ENCODE measurements at regions of chr9 and their contacts with region 1.

Region 1: GRCh38 chr9:73104342-73104741 is 47.3 kb upstream of the ANXA1 start:
- DNase-seq: no peak
- ATAC-seq: no peak
- H3K4me3 ChIP-seq: no peak overlapping the region
- H3K27ac ChIP-seq: 0 out of 6 replicates have a peak overlapping the region, but pooled peaks of 1 of the 2 experiments have one; percentile 12
- H3K4me1 ChIP-seq: peaks cover 7% of the 10 kb centered on the region; the same call in 2 of the 3 replicates
- CTCF ChIP-seq: no peak
- EP300 ChIP-seq: no peak
- POLR2A ChIP-seq: no peak
- RAD21 ChIP-seq: no peak

Region 2: DNA sequence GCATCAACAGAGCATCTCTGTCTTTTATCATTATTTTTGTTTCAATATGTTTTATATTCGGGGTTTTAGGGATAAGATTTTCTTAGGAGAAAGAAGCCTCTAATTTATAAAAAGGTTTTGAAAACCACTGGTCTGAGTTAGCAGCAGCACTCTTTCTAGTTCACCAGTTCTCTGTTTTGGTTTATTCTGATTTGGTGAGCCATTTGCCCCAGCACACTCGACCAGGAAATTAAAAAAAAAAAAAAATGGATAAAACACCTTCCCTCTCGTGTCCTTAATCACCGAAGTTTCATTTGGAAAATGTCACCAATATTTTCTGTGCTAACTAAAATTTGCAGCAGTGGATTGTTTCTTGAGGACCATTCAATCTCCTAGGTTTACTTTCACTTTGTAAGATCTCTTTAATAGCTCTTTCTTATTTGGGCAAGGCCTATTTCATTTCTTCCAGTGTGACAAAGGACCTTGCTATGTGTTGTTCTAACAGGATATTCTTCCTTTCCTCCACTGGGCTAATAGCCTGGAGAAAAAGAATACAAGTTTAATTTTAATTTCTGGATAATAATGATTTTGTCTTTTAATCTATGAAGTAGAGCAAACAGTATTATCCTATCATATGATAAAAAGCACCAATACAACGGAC is 10.5 kb before region 1 on chr9:
- CTCF ChIA-PET with region 1: interaction called, 20 read pairs
- POLR2A ChIA-PET with region 1: interaction called, 3 read pairs
- DNase-seq: no peak
- ATAC-seq: peak in 1 of 2 experiments; percentile 20; a peak in 1 of 6 replicates
- H3K4me3 ChIP-seq: peak overlapping the region; percentile 38
- H3K27ac ChIP-seq: peak overlapping the region; percentile 83 to 88
- H3K4me1 ChIP-seq: peaks cover 54% of the 10 kb centered on the region
- CTCF ChIP-seq: no peak
- EP300 ChIP-seq: no peak
- POLR2A ChIP-seq: no peak
- RAD21 ChIP-seq: no peak

Region 3: DNA sequence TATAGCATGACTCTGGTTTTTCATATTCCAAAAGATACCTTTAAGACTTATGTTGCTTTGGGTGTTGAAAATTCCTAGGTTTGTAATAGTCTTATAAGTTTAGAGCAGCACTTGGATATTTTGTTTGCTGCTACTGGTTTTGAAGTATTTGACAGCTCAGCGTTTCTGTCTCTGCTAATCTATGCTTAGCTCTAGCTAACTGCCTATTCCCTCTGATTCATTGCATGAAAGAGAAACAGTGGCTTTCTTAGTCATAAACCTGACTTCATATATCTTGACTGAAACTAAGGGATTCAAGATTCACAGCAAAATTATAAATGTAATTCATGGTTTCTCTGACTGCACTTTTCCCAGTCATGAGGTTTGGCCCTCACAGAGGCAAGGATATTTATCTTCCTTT is 11.7 kb after region 1 on chr9:
- CTCF ChIA-PET with region 1: interaction called, 28 read pairs
- POLR2A ChIA-PET with region 1: no interaction called
- DNase-seq: no peak
- ATAC-seq: peak in 1 of 2 experiments; percentile 51; a peak in 2 of 6 replicates
- H3K4me3 ChIP-seq: no peak overlapping the region
- H3K27ac ChIP-seq: peak overlapping the region; percentile 37 to 68; a peak in 5 of 6 replicates
- H3K4me1 ChIP-seq: peaks cover 59% of the 10 kb centered on the region
- CTCF ChIP-seq: no peak
- EP300 ChIP-seq: no peak
- POLR2A ChIP-seq: no peak
- RAD21 ChIP-seq: no peak

Region 4: DNA sequence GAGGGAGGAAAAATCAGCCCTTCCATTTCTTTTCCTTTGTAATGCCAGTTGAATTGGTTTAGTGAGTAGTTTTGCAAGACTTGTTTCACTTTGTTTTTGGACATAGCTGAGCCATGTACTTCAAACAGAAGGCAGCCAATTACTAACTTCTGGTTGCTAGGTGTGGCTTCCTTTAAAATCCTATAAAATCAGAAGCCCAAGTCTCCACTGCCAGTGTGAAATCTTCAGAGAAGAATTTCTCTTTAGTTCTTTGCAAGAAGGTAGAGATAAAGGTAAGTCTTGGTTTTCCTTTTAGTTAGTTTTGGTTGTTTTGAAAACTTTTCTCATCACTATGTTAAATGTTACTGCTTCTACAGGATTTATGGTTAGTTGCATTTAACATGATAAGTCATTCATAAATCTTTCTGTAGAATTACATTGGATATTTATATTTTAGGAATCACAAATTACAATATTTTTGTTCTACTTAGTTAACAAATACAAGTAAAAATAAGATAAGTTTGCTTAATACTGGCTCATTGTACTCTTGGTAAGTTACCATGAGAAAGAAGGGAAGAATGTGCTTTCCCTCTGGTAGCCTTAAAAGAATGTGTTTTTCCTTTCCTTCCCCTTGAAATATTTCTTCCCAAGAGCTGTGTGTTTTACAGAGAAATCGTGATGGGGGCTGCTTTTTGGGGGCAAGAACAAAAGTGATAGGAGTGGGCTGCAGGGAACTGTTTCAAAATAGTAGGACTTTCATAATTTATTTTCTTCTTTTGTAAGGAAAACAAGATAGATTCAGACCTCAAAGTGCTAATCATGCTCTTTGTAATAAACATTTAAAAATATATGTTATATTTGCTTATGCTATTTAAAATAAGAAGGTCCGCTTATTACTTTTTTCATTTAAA is 47.6 kb after region 1 on chr9 and contains the start of gene ANXA1:
- CTCF ChIA-PET with region 1: interaction called, 12 read pairs
- POLR2A ChIA-PET with region 1: interaction called, 6 read pairs
- DNase-seq: peak; percentile 75 to 94
- ATAC-seq: peak; percentile 72 to 81
- H3K4me3 ChIP-seq: peak within 1 kb of the TSS; percentile 62
- H3K27ac ChIP-seq: peak within 1 kb of the TSS; percentile 89 to 94
- H3K4me1 ChIP-seq: peaks cover 45% of the 10 kb centered on the region
- CTCF ChIP-seq: no peak
- EP300 ChIP-seq: no peak
- POLR2A ChIP-seq: no peak
- RAD21 ChIP-seq: peak in 1 of 2 experiments; percentile 3; a peak in 1 of 5 replicates
- polyA plus RNA-seq, gene ANXA1: 1,630 and 1,990 TPM in 2 replicates

Region 5: GRCh38 chr9:73160868-73161267 is 56.5 kb after region 1 on chr9:
- CTCF ChIA-PET with region 1: interaction called, 12 read pairs
- POLR2A ChIA-PET with region 1: interaction called, 4 read pairs
- DNase-seq: no peak
- ATAC-seq: no peak
- H3K4me3 ChIP-seq: no peak overlapping the region
- H3K27ac ChIP-seq: no peak overlapping the region
- H3K4me1 ChIP-seq: peaks cover 88% of the 10 kb centered on the region
- CTCF ChIP-seq: no peak
- EP300 ChIP-seq: no peak
- POLR2A ChIP-seq: no peak
- RAD21 ChIP-seq: no peak

Region 6: DNA sequence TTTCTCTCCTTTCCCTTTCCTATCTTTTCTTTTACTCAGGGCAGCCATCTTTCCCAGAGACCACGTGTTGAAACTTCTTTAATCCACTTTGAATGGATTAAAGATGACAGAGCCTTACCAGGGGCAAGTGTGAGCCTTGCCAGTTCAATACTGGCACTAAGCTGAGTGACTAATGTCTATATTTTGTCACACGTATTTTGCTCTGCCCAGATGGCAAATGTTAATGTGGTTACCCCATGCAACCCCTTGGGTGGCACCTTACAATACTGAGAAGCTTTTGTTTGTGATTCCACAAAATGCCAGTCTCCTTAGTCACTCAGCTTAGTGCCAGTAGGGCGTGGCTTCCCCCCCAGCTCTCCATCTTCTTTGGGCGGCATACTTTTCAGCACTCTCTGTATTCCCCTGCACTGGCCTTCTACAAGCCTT is 72.1 kb after region 1 on chr9:
- CTCF ChIA-PET with region 1: interaction called, 34 read pairs
- POLR2A ChIA-PET with region 1: interaction called, 3 read pairs
- DNase-seq: peak; percentile 58 to 89
- ATAC-seq: peak; percentile 58 to 64
- H3K4me3 ChIP-seq: no peak overlapping the region
- H3K27ac ChIP-seq: peak overlapping the region; percentile 88
- H3K4me1 ChIP-seq: peaks cover 98% of the 10 kb centered on the region
- CTCF ChIP-seq: no peak
- EP300 ChIP-seq: peak; percentile 50 to 68; a peak in 3 of 5 replicates
- POLR2A ChIP-seq: no peak
- RAD21 ChIP-seq: no peak; a peak in 1 of 5 replicates

Region 7: DNA sequence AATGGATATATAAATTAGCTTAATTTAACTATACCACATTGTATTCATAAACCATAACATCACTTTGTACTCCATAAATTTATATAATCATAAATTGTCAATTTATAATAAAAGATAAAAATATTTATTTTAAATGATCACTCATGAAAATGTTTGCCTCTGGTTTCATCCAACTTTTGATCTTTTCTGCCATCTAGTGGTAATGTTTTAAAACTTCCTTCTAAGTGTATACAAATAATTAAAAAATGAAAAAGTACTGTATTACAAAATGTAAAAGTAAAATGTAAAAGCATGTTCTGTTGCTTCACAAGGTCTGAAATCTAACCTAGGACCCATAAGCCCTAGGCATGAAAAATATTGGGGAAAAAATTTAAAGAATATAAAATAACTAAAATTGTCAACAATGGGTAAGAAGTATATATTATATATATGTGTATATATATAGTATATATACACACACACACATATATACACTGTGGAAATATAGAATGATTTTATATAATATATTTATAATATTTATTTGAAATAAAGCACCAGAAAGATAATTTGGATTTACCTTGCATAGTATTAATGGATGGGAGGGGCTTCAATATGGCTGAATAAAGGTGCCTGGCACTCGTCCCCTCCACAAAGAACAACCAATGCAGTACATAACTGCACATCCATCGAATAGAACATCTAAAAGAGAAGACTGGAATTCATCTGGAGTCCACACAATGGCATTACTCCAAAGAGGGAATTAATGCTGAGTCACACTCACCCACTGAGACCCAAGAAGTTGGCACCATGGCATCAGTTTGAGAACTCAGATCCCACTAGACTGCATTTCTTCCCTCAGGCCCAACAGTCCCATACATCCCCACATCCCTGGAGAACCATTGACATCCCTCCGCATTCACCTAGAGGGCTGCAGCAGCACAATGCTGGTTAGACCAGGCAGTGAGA is 79.8 kb after region 1 on chr9:
- CTCF ChIA-PET with region 1: interaction called, 20 read pairs
- POLR2A ChIA-PET with region 1: no interaction called
- DNase-seq: peak in 1 of 2 experiments; percentile 65
- ATAC-seq: no peak
- H3K4me3 ChIP-seq: 0 out of 3 replicates have a peak overlapping the region, but pooled peaks have one; percentile 39
- H3K27ac ChIP-seq: peak overlapping the region; percentile 85 to 88
- H3K4me1 ChIP-seq: peaks cover 55% of the 10 kb centered on the region
- CTCF ChIP-seq: peak; percentile 66; the same call in 2 of the 3 replicates
- EP300 ChIP-seq: no peak
- POLR2A ChIP-seq: no peak
- RAD21 ChIP-seq: peak; percentile 80 to 89

Region 8: DNA sequence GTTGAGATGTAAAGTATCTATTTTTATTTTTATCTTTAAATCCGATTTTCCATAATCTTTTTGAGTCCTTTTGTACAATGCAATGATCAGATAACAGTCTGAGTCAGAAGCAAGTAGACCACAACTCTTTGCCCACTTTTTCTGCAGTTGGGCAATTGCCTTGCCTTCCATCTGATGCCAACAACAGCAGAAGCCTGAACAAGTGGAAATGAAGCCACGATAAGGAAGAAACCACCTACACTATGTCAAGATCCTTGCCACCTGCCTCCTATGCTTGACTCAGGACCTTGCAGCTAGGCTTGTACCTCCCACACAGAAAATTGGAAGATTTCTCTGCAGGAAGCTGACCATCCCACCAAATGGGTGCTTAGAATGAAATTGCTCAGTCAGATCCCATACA is 125.9 kb after region 1 on chr9:
- CTCF ChIA-PET with region 1: no interaction called
- POLR2A ChIA-PET with region 1: no interaction called
- DNase-seq: no peak
- ATAC-seq: no peak
- H3K4me3 ChIP-seq: no peak overlapping the region
- H3K27ac ChIP-seq: no peak overlapping the region
- H3K4me1 ChIP-seq: no peaks in the 10 kb centered on the region
- CTCF ChIP-seq: no peak
- EP300 ChIP-seq: no peak
- POLR2A ChIP-seq: no peak
- RAD21 ChIP-seq: no peak

Region 9: DNA sequence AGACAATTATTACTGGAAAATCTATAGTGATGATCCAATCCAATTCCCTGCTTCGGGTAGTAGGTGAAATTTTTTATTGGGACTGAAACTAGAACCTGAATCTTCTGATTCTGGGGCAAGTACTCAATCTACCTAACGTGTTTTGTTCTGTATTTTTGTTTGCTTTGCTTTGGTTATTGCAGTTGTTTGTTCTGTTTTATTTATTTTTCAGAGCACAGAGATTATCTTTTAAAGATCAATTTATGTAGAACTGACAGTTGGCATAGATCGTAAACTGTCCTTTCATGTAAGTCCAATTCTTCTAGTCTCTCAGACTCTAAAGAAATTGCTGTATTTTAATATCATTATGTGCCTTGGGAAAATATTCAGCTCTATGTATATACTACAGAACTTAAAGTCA is 449.0 kb after region 1 on chr9:
- CTCF ChIA-PET with region 1: no interaction called
- POLR2A ChIA-PET with region 1: no interaction called
- DNase-seq: no peak
- ATAC-seq: no peak
- H3K4me3 ChIP-seq: no peak overlapping the region
- H3K27ac ChIP-seq: no peak overlapping the region
- H3K4me1 ChIP-seq: no peaks in the 10 kb centered on the region
- CTCF ChIP-seq: no peak
- EP300 ChIP-seq: no peak
- POLR2A ChIP-seq: no peak
- RAD21 ChIP-seq: no peak